PC-9 (cell line): ENCODE measurements at regions of chr15 and their contacts with region 1.

Region 1: DNA sequence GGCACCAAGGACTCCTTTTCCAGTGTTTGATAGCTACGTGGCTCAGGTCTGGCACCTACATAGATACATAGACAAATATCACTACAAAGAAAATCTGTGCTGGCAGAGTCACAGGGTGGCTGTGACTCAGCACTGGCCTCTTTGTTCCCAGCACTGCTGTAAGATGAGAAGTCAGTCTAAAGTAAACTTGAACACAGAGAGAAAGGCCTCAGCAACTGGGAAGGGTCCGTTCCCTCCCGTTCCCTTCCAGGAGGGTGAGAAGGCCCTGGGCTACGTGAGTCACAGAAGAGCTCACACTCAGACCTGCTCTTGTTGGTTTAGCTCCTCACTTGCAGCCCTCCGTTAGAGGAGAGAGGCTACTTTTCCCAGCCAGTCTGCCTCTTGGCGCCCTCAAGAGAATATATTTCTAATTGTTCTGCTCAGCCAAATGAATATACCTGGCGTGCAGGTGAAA is 23.1 kb downstream of the ANXA2 start:
- DNase-seq: peak; percentile 90 to 93
- H3K4me3 ChIP-seq: no peak overlapping the region
- H3K27ac ChIP-seq: peak overlapping the region; percentile 97
- H3K4me1 ChIP-seq: peaks cover 56% of the 10 kb centered on the region
- H3K27me3 ChIP-seq: no peaks in the 10 kb centered on the region
- CTCF ChIP-seq: no peak

Region 2: GRCh38 chr15:60362321-60363086 is 12.2 kb before region 1 on chr15:
- CTCF ChIA-PET with region 1: interaction called, 11 read pairs
- POLR2A ChIA-PET with region 1: interaction called, 10 read pairs
- intact Hi-C with region 1: no loop called
- DNase-seq: peak; percentile 53 to 83
- H3K4me3 ChIP-seq: no peak overlapping the region
- H3K27ac ChIP-seq: peak overlapping the region; percentile 76
- H3K4me1 ChIP-seq: peaks cover 24% of the 10 kb centered on the region
- H3K27me3 ChIP-seq: no peaks in the 10 kb centered on the region
- CTCF ChIP-seq: no peak

Region 3: DNA sequence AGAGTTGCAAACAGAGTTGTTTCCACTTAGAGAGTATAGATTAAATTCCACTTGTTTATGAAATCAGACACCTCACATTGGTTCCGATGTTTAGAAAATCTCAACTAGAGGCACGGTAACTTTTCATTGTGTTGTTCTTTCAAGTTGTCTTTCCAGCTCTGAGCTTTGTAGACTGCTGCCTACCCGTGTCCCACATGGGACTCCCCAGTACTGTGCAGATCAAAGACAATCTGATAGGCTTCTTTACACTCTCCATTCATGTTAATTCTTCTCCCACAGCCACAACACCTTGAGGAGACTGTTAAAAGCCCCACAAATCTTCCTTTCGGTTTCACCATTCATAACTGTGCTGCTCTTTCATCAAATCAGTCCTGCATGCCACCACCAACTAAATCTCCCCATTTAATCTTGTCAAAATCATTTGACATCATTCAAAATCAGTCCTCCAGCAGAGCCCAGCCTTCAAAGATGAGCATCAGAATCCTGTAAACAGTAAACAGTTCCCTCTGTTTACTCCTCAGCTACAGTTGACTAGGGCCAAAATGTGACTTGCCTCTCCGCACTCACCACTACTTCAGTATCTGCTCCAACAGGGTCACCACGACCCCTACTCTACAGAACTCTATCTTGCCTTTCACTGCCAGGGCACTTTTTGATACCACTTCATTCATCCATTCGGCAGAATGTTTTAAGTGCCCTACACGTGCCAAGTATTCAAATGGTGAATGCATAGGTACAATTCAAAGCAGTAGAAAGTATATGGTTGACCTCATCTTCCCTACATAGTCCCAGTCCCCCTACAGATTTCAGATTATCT is 14.8 kb after region 1 on chr15:
- CTCF ChIA-PET with region 1: interaction called, 4 read pairs
- POLR2A ChIA-PET with region 1: interaction called, 24 read pairs
- intact Hi-C with region 1: loop called (anchors 1 kb)
- DNase-seq: no peak
- H3K4me3 ChIP-seq: no peak overlapping the region
- H3K27ac ChIP-seq: no peak overlapping the region; the same call in 1 of the 2 replicates
- H3K4me1 ChIP-seq: peaks cover 50% of the 10 kb centered on the region
- H3K27me3 ChIP-seq: no peaks in the 10 kb centered on the region
- CTCF ChIP-seq: no peak

Region 4: GRCh38 chr15:60408438-60409105 is 33.9 kb after region 1 on chr15:
- CTCF ChIA-PET with region 1: no interaction called
- POLR2A ChIA-PET with region 1: interaction called, 3 read pairs
- intact Hi-C with region 1: loop called (anchors 1 kb)
- DNase-seq: peak in 1 of 2 experiments; percentile 92
- H3K4me3 ChIP-seq: no peak overlapping the region
- H3K27ac ChIP-seq: peak overlapping the region; percentile 90
- H3K4me1 ChIP-seq: peaks cover 39% of the 10 kb centered on the region
- H3K27me3 ChIP-seq: no peaks in the 10 kb centered on the region
- CTCF ChIP-seq: no peak